ENCODE measurements at regions of chr19 and their contacts with region 1.

Region 1: GRCh38 chr19:50922317-50922853 is 11.2 kb upstream of the KLK4 start:
- DNase-seq: peak; percentile 43
- H3K4me3 ChIP-seq: no peak overlapping the region
- H3K27ac ChIP-seq: no peak overlapping the region
- H3K27me3 ChIP-seq: peaks cover 2% of the 10 kb centered on the region
- CTCF ChIP-seq: peak; percentile 88

Region 2: DNA sequence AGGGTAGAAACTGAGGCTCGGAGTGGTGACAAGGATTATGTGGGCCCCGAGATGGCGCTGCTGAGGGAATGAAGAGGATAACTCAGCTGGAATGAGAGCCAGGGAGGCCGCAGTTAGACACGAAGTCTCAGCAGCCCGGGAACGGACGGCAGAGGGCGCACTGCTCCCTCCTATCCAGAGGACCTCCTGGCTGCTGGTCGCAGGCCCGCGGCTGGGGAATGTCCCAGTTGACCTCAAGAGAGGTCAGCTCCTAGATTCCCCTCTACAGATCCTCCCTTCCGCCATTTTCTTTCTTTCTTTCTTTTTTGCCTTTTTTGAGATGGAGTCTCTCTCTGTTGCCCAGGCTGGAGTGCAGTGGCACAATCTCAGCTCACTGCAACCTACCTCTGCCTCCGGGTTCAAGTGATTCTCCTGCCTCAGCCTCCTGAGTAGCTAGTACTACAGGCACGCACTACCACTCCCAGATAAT is 384.6 kb before region 1 on chr19:
- CTCF ChIA-PET with region 1: interaction called, 11 read pairs
- POLR2A ChIA-PET with region 1: no interaction called
- DNase-seq: peak; percentile 33
- H3K4me3 ChIP-seq: no peak overlapping the region
- H3K27ac ChIP-seq: no peak overlapping the region
- H3K27me3 ChIP-seq: no peaks in the 10 kb centered on the region
- CTCF ChIP-seq: peak; percentile 79

Region 3: GRCh38 chr19:50906217-50906616 is 16.2 kb before region 1 on chr19:
- CTCF ChIA-PET with region 1: interaction called, 12 read pairs
- POLR2A ChIA-PET with region 1: no interaction called
- DNase-seq: no peak
- H3K4me3 ChIP-seq: no peak overlapping the region
- H3K27ac ChIP-seq: no peak overlapping the region
- H3K27me3 ChIP-seq: peaks cover 3% of the 10 kb centered on the region
- CTCF ChIP-seq: peak; percentile 46

Measured in AG04450 (cell line).